Thyroid gland (tissue), 4 donors: ENCODE measurements at regions of chr21 and their contacts with region 1.

Region 1: DNA sequence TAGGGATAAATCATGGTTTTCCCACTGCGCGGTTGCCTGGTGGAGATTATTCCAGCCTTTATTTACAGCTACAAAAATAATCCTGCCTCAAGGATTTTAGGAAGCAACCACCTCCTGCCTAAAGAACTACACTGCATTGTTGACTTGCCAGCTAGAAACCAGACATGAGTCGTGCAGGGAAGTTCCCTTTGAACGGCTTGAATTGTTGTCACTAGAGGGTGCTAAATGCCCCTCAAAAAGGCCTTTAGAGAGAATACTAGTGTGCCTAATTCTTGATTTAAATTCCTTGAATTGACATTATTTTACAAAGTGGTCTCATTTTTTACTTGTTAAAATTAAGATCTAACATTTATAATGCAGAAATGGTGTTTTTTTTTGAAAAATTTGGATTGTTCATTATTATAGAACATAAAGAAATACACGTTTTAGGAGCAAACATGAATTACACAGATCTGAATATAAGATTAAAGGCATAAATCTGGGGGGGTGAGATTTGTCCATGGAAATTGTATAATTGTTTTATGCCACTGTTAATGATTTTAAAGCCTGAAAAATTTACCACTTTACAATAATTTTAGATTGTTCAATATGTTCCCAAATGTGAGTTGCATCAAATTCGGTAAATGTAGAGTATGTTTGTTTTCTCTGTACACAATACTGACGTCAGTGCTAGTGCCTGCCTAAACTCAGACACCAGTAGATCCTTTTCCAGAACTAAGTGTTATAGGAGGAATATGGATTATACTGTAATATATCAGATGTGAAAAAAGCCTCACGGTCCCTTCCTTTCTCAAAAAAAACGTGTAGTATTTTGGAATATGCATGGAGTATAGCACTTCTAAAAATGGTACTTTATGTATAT is 7.6 kb upstream of the ERG start:
- DNase-seq: peak; percentile 13 to 24
- H3K4me3 ChIP-seq: no peak overlapping the region
- H3K27ac ChIP-seq: no peak overlapping the region
- H3K4me1 ChIP-seq: no peaks in the 10 kb centered on the region
- H3K27me3 ChIP-seq: no peaks in the 10 kb centered on the region
- CTCF ChIP-seq: peak; percentile 25 to 59 (median 50)
- POLR2A ChIP-seq: no peak

Region 2: DNA sequence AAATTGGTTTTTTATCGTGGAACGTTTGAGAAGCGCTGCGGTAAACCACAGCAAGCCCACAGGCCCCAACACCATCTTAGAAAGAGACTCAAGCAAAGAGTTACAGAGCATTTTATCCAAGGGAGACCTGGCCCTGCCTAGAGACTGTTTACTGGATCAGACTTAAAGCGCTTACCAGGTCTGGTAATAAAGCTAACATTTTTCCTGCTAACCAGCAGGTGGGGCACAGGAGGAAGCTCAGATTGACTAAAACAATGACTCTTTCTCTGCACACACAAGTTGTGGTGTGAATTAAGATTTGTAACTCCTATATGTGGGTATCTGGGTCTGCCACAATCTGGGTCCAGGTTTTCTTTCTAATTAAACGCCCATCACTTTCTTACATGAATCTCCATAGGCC is 163.3 kb after region 1 on chr21:
- intact Hi-C with region 1: loop called (anchors 10 kb)
- DNase-seq: no peak
- H3K4me3 ChIP-seq: no peak overlapping the region
- H3K27ac ChIP-seq: no peak overlapping the region
- H3K4me1 ChIP-seq: peaks cover 4 to 6% of the 10 kb centered on the region in 2 donors
- H3K27me3 ChIP-seq: no peaks in the 10 kb centered on the region
- CTCF ChIP-seq: peak in 3 of 6 experiments; percentile 17 to 30 (median 25)
- POLR2A ChIP-seq: no peak

Region 3: GRCh38 chr21:38733973-38734546 is 228.2 kb after region 1 on chr21:
- intact Hi-C with region 1: loop called (anchors 10 kb)
- DNase-seq: peak; percentile 86 to 88
- H3K4me3 ChIP-seq: peak overlapping the region in 1 of 3 donors; percentile 0
- H3K27ac ChIP-seq: peak overlapping the region in 2 of 3 donors; percentile 24 to 44
- H3K4me1 ChIP-seq: peaks cover 0 to 7% of the 10 kb centered on the region in 2 donors
- H3K27me3 ChIP-seq: no peaks in the 10 kb centered on the region
- CTCF ChIP-seq: peak; percentile 84 to 97 (median 93)
- POLR2A ChIP-seq: no peak

Region 4: GRCh38 chr21:39137248-39138178 is 631.6 kb after region 1 on chr21:
- intact Hi-C with region 1: loop called (anchors 10 kb)
- DNase-seq: no peak
- H3K4me3 ChIP-seq: no peak overlapping the region
- H3K27ac ChIP-seq: no peak overlapping the region
- H3K4me1 ChIP-seq: no peaks in the 10 kb centered on the region
- H3K27me3 ChIP-seq: no peaks in the 10 kb centered on the region
- CTCF ChIP-seq: no peak
- POLR2A ChIP-seq: no peak

Region 5: GRCh38 chr21:39175154-39175553 is 669.3 kb after region 1 on chr21:
- intact Hi-C with region 1: no loop called
- DNase-seq: no peak
- H3K4me3 ChIP-seq: no peak overlapping the region
- H3K27ac ChIP-seq: no peak overlapping the region
- H3K4me1 ChIP-seq: no peaks in the 10 kb centered on the region
- H3K27me3 ChIP-seq: no peaks in the 10 kb centered on the region
- CTCF ChIP-seq: peak in 5 of 6 experiments; percentile 20 to 59 (median 35)
- POLR2A ChIP-seq: no peak